ENCODE measurements at regions of chr21 and their contacts with region 1.

Region 1: DNA sequence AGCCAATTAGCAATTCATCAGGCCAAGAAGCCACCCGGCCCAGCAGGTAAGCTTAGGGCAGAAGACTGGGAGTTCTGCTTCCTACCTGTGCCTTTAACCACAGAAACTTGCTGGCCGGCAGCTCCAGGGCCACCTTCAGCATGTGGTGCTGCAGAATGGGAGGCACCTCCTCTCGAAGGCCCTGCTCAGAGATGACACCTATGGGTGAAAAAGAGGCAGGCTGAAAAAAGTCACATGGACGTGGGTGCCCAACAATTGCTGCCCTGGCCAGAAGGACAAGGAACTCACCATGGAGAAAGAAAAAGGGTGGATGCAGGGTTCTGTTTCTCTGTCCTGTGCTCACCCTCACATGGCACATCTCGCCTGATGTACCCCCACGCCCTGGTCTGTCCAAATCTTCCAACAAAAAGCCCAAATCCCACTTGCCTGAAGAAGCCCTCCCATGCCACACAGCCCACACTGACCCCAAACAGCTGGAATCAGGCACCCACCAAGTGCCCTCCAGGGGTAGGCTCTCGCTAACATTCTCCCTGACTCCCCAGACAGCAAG is 33.0 kb downstream of the URB1 start:
- DNase-seq: no peak
- H3K4me3 ChIP-seq: no peak overlapping the region
- H3K27ac ChIP-seq: peak overlapping the region in 1 of 2 donors; percentile 78
- H3K4me1 ChIP-seq: peaks cover 0 to 9% of the 10 kb centered on the region in 2 donors
- H3K27me3 ChIP-seq: no peaks in the 10 kb centered on the region
- CTCF ChIP-seq: peak in 1 of 3 donors; percentile 10
- POLR2A ChIP-seq: no peak

Region 2: GRCh38 chr21:31850886-31851285 is 508.9 kb before region 1 on chr21:
- intact Hi-C with region 1: loop called (anchors 5 kb)
- DNase-seq: no peak
- H3K4me3 ChIP-seq: no peak overlapping the region
- H3K27ac ChIP-seq: no peak overlapping the region
- H3K4me1 ChIP-seq: no peaks in the 10 kb centered on the region
- H3K27me3 ChIP-seq: no peaks in the 10 kb centered on the region
- CTCF ChIP-seq: no peak
- POLR2A ChIP-seq: no peak

Region 3: GRCh38 chr21:32135401-32136363 is 224.1 kb before region 1 on chr21:
- intact Hi-C with region 1: no loop called
- DNase-seq: no peak
- H3K4me3 ChIP-seq: peak overlapping the region in 1 of 3 donors; percentile 22
- H3K27ac ChIP-seq: no peak overlapping the region
- H3K4me1 ChIP-seq: no peaks in the 10 kb centered on the region
- H3K27me3 ChIP-seq: no peaks in the 10 kb centered on the region
- CTCF ChIP-seq: no peak
- POLR2A ChIP-seq: no peak

Region 4: DNA sequence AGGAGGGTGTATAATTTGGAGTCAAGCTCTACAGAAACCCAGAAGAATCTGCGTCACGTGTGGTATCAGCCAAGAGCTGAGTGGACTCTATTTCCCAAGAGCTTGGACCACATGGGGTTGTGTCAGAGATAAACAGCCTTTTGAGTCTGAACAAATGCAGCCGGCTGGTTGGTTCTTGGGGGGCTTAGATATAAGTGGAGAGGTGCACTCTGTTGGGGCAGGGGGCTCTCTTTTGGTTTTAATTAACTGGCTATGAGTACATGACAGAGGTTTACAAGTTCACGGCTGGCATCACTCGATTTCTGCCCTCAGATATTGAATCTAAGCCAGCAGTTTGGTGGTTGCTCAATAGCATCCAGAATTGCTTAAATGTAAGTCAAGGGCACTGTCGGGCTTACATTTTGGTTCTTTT is 61.6 kb before region 1 on chr21:
- intact Hi-C with region 1: loop called (anchors 2 kb)
- DNase-seq: no peak
- H3K4me3 ChIP-seq: no peak overlapping the region
- H3K27ac ChIP-seq: no peak overlapping the region
- H3K4me1 ChIP-seq: no peaks in the 10 kb centered on the region
- H3K27me3 ChIP-seq: no peaks in the 10 kb centered on the region
- CTCF ChIP-seq: no peak
- POLR2A ChIP-seq: no peak

Measured in breast epithelium (tissue), 4 donors.